ENCODE measurements at regions of chr2 and their contacts with region 1.

Region 1: GRCh38 chr2:102020596-102021181 is 28.9 kb downstream of the IL1R2 start:
- DNase-seq: peak; percentile 88 to 93 (median 88)
- ATAC-seq: peak; percentile 76 to 96 (median 94)
- H3K4me3 ChIP-seq: no peak overlapping the region
- H3K27ac ChIP-seq: peak overlapping the region in 2 of 12 donors; percentile 25 to 78
- H3K4me1 ChIP-seq: peaks cover 0 to 45% (median 15%) of the 10 kb centered on the region in 12 donors
- H3K27me3 ChIP-seq: no peaks in the 10 kb centered on the region
- CTCF ChIP-seq: peak; percentile 96 to 100 (median 99)
- POLR2A ChIP-seq: no peak

Region 2: DNA sequence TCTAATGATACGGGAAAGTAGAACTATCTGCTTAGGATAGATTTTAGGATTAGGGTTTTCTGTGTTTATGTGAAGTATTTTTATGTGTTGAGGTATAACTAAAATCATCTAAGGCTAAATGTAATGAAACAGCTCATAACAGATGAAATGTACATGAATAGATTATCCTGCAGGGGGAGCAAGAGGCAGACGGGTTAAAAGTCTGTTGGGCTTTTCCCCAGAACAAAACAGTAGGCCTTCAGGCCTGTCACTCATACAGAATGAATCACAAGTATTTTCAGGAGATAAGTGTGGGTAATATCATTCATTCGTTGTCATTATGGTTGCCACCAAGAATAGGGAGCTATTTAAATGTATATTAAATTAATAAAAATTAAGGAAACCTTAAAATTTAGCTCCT is 136.8 kb before region 1 on chr2:
- intact Hi-C with region 1: loop called in 1 of 10 experiments (anchors 10 kb)
- DNase-seq: no peak
- ATAC-seq: peak in 3 of 4 donors; percentile 65 to 79 (median 77)
- H3K4me3 ChIP-seq: no peak overlapping the region
- H3K27ac ChIP-seq: peak overlapping the region in 1 of 12 donors; percentile 25
- H3K4me1 ChIP-seq: peaks cover 0 to 35% (median 17%) of the 10 kb centered on the region in 12 donors
- H3K27me3 ChIP-seq: no peaks in the 10 kb centered on the region
- CTCF ChIP-seq: peak; percentile 33 to 68 (median 54)
- POLR2A ChIP-seq: no peak

Region 3: GRCh38 chr2:102141970-102142828 is 121.5 kb after region 1 on chr2 and contains the start of gene IL1R1:
- intact Hi-C with region 1: loop called in 1 of 10 experiments (anchors 5 kb)
- DNase-seq: peak; percentile 87 to 92 (median 89)
- ATAC-seq: peak; percentile 80 to 96 (median 92)
- H3K4me3 ChIP-seq: peak within 1 kb of the TSS; percentile 52 to 90 (median 76)
- H3K27ac ChIP-seq: peak within 1 kb of the TSS; percentile 82 to 96 (median 92)
- H3K4me1 ChIP-seq: peaks cover 0 to 41% (median 14%) of the 10 kb centered on the region in 12 donors
- H3K27me3 ChIP-seq: no peaks in the 10 kb centered on the region
- CTCF ChIP-seq: peak in 3 of 12 donors; percentile 2 to 22 (median 11)
- POLR2A ChIP-seq: peak in 1 of 2 donors; percentile 78
- total RNA-seq, gene IL1R1: 10.9 to 49.0 (median 19.6) TPM

Region 4: DNA sequence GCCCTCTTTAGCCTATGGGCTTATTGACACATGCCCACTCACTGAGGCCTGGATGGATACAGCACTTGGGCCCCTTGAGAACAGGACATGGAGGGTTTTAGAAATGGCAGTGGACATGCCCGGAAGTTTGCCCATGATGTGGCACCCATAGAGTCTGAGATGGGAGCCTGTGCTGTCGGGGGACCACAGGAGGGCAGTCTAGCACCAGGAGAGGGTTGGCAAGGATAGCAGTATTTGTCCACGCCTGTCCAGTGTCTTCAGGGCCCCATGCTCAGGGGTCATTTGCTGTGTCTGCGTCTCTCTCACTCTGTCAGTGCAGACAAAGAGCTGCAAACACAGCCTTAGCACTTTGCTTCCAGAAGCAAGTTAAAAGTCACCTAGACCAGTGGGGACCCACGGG is 214.8 kb after region 1 on chr2:
- intact Hi-C with region 1: loop called (anchors 1 to 5 kb)
- DNase-seq: no peak
- ATAC-seq: peak in 2 of 4 donors; percentile 17 to 58
- H3K4me3 ChIP-seq: no peak overlapping the region
- H3K27ac ChIP-seq: no peak overlapping the region
- H3K4me1 ChIP-seq: peaks cover 0 to 15% (median 6%) of the 10 kb centered on the region in 12 donors
- H3K27me3 ChIP-seq: no peaks in the 10 kb centered on the region
- CTCF ChIP-seq: peak in 8 of 12 donors; percentile 4 to 37 (median 20)
- POLR2A ChIP-seq: no peak

Region 5: GRCh38 chr2:102336502-102336945 is 315.8 kb after region 1 on chr2:
- intact Hi-C with region 1: loop called in 2 of 10 experiments (anchors 5 to 10 kb)
- DNase-seq: peak in 1 of 5 donors; percentile 34
- ATAC-seq: peak in 3 of 4 donors; percentile 72 to 86 (median 75)
- H3K4me3 ChIP-seq: peak overlapping the region in 6 of 12 donors; percentile 1 to 34 (median 28)
- H3K27ac ChIP-seq: peak overlapping the region in 11 of 12 donors; percentile 2 to 75 (median 33)
- H3K4me1 ChIP-seq: peaks cover 0 to 25% (median 9%) of the 10 kb centered on the region in 12 donors
- H3K27me3 ChIP-seq: no peaks in the 10 kb centered on the region
- CTCF ChIP-seq: no peak
- POLR2A ChIP-seq: no peak

Region 6: DNA sequence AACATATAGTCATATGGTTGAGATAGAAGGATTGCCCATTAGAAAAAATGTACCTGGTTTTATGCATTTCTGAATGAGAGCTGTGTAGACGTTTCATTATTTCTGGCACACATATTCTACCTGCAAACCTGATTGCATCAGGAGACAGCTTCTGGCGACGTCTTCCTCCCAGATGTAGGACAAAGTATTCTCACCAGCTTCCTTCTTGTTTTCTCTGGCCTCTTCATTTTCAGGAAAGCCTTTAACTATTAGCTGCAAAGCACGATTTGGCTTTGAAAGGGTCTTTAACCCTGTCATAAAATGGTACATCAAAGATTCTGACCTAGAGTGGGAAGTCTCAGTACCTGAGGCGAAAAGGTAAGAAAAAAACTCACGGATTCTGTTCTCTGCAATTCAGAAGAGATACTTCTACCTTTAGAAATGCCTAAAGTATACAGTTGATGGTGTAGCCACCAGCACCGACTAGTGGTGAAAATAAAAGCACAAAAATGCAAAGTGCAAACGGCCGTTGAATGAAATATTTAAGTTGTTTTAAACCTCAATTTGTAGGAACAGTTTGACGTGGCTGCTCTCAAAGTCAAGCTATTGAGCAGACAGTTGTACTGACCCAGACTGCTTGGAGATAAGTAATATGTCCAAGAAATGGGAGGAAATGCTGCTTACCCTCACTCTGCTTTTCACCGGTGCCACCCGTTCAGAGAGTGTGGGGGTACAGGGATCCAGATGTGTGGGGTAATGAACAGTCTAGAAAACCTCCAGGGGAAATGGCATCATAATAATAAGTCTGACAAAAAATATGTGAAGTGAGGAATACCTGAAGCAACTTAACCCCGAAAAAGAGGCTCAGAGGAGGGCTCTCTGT is 422.5 kb after region 1 on chr2:
- intact Hi-C with region 1: loop called in 8 of 10 experiments (anchors 2 to 10 kb)
- DNase-seq: no peak
- ATAC-seq: peak in 2 of 4 donors; percentile 36 to 49
- H3K4me3 ChIP-seq: no peak overlapping the region
- H3K27ac ChIP-seq: peak overlapping the region in 1 of 12 donors; percentile 18
- H3K4me1 ChIP-seq: peaks cover 0 to 15% (median 0%) of the 10 kb centered on the region in 12 donors
- H3K27me3 ChIP-seq: no peaks in the 10 kb centered on the region
- CTCF ChIP-seq: peak; percentile 49 to 79 (median 62)
- POLR2A ChIP-seq: no peak

Measured in heart left ventricle (tissue), 16 donors.